ENCODE measurements at regions of chr6 and their contacts with region 1.

Region 1: GRCh38 chr6:28136585-28137504 is 4.8 kb upstream of the ZKSCAN8 start:
- DNase-seq: peak; percentile 94
- H3K4me3 ChIP-seq: peak overlapping the region; percentile 94
- H3K27ac ChIP-seq: peak overlapping the region; percentile 91
- H3K4me1 ChIP-seq: peaks cover 60% of the 10 kb centered on the region
- CTCF ChIP-seq: no peak

Region 2: GRCh38 chr6:28104392-28105244 is 32.2 kb before region 1 on chr6:
- CTCF ChIA-PET with region 1: no interaction called
- POLR2A ChIA-PET with region 1: interaction called, 8 read pairs
- intact Hi-C with region 1: loop called (anchors 1 kb)
- DNase-seq: peak; percentile 90
- H3K4me3 ChIP-seq: peak overlapping the region; percentile 71
- H3K27ac ChIP-seq: peak overlapping the region; percentile 44
- H3K4me1 ChIP-seq: peaks cover 23% of the 10 kb centered on the region
- CTCF ChIP-seq: peak; percentile 68

Region 3: DNA sequence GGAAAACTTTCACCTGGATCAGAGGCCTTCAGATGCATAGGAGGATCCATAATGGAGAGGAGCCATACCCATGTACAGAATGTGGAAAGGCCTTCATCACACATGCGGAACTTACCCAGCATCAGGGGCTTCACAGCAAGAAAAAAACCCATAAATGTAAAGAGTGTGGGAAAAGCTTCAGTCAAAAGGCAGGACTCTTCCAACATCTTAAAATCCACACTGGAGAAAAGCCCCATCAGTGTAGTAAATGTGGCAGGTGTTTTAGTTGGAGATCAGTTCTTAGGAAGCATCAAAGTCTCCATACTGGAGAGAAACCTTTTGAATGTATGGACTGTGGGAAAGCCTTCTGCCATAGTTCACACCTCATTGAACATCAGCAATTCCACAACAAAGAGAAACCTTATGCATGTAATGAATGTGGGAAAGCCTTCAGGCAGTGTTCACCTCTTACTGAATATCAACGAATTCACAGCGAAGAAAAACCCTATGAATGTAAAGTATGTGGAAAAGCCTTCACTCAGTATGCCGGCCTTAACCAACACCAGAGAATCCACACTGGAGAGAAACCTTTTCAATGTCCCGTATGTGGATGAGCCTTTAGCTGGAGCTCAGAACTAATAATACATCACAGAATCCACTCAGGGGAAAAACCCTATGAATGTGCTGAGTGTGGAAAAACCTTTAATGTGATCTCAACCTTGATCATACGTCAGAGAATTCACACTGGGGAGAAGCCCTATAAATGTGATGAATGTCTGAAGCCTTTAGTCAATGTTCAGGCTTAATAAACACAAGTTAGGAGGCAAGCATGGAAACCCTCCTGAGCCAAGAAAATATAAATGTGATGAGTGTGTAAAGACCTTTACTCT is 51.5 kb after region 1 on chr6:
- CTCF ChIA-PET with region 1: no interaction called
- POLR2A ChIA-PET with region 1: no interaction called
- intact Hi-C with region 1: no loop called
- DNase-seq: no peak
- H3K4me3 ChIP-seq: no peak overlapping the region
- H3K27ac ChIP-seq: no peak overlapping the region
- H3K4me1 ChIP-seq: no peaks in the 10 kb centered on the region
- CTCF ChIP-seq: no peak

Region 4: DNA sequence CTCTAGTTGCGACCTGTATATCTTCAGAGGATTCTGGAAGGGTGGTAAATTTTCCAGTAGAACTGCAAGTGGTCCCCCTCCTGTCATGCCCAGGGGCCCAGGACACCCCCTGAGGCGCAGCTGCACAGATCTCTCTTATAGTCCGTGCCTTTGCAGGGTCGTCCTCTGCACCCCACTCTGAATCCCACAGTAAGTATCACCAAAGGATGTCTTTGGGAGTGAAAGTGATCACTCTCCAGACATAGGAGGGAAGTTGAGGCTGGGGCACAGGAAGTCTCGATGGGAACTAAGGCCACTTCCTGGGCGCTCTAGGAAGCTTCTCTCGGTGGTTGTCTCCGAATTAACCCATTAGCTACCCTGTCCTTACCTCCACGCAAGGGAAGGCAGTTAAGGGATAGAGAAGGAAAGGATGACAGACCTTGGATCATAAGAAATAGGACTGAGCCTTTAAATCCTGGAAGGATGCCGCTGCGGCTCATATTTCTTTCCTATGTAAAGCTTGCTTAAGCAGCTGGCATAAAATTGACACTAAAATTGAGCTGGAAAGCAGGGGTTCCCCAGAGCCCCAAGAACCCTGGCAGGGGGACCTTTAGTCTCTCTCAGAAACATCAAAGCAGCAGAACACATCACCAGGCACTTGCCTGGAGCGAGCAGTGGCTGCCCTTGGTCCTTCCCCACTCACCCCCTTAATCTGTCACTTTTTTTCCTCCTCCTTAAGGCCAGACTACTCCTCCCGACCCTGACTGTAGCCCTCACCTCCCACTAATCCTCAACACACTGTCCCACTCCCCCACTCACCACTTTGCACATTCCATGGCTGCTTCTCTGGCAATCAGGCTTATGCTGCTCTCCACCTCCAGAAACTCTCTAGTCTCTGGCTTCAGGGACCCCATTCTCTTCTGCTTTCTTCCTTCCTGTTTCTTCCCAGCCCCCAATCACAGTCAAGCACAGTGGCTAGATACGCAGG is 115.4 kb after region 1 on chr6 and contains the start of gene ZKSCAN4:
- CTCF ChIA-PET with region 1: interaction called, 7 read pairs
- POLR2A ChIA-PET with region 1: interaction called, 14 read pairs
- intact Hi-C with region 1: loop called (anchors 1 kb)
- DNase-seq: peak; percentile 92
- H3K4me3 ChIP-seq: peak within 1 kb of the TSS; percentile 99
- H3K27ac ChIP-seq: peak within 1 kb of the TSS; percentile 47
- H3K4me1 ChIP-seq: peaks cover 21% of the 10 kb centered on the region
- CTCF ChIP-seq: no peak
- total RNA-seq, gene ZKSCAN4: 7.9 and 9.3 TPM in 2 replicates

Region 5: DNA sequence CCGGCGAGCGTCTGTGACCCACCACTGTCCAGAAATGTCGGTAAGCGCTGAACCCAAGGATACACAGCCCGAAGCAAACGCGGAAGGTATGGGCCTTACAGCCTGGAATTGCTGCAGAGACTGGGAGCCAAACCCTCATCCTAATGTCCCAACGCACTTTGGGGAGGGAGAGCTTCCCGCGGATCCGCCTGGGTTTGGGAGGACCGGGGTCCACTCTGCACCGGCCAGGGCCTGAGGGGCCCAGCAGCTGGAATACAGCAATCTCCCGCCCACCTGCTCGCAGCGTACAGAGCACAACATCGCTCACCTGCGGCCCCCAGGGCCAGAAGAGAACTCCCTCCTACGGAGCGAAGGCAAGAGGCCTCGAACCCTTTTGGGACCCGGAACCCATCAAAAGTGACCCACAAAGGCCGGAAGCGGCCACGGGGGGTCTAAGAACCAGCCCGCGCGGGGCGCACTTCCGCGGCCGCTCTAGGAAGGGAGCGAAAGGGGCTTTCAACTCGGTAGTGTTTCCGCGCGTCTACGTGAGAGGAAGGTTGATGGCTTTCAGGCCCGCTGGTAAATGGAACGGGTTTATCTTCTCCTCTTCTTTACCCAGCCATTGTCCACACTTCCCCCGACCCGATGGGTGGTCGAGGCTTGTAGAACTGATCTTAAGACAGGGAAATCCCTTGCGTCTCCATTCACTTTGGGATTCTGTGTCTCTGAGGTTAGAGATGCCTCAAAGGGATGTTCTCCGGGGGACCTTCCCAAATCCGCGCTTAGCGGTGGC is 262.7 kb after region 1 on chr6 and contains the start of gene ZSCAN12:
- CTCF ChIA-PET with region 1: no interaction called
- POLR2A ChIA-PET with region 1: interaction called, 3 read pairs
- intact Hi-C with region 1: loop called (anchors 2 kb)
- DNase-seq: peak; percentile 94
- H3K4me3 ChIP-seq: peak within 1 kb of the TSS; percentile 88
- H3K27ac ChIP-seq: peak within 1 kb of the TSS; percentile 80
- H3K4me1 ChIP-seq: peaks cover 39% of the 10 kb centered on the region
- CTCF ChIP-seq: peak; percentile 77
- total RNA-seq, gene ZSCAN12: 10.2 and 10.5 TPM in 2 replicates

Region 6: DNA sequence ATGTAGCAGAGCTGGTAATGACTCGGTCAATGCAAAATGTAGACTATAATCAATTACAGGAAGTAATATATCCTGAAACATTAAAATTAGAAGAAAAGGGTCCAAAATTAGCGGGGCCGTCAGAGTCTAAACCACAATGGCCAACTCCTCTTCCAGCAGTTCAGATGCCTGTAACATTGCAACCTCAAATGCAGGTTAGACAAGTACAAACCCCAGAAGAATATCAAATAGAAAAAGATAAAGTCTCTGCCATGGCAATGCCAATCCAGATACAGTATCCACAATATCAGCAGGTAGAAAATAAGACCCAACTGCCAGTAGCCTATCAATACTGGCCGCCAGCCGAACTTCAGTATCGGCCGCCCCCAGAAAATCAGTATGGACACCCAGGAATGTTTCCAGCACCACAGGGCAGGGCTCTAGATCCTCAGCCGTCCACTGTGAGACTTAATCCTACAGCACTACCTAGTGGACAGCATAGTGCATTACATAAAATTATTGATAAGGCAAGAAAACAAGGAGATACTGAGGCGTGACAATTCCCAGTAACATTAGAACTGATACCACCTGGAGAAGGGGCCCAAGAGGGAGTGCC is 547.2 kb after region 1 on chr6:
- CTCF ChIA-PET with region 1: no interaction called
- POLR2A ChIA-PET with region 1: no interaction called
- intact Hi-C with region 1: loop called (anchors 5 kb)
- DNase-seq: peak; percentile 65
- H3K4me3 ChIP-seq: no peak overlapping the region
- H3K27ac ChIP-seq: no peak overlapping the region
- H3K4me1 ChIP-seq: peaks cover 3% of the 10 kb centered on the region
- CTCF ChIP-seq: peak; percentile 85

Region 7: DNA sequence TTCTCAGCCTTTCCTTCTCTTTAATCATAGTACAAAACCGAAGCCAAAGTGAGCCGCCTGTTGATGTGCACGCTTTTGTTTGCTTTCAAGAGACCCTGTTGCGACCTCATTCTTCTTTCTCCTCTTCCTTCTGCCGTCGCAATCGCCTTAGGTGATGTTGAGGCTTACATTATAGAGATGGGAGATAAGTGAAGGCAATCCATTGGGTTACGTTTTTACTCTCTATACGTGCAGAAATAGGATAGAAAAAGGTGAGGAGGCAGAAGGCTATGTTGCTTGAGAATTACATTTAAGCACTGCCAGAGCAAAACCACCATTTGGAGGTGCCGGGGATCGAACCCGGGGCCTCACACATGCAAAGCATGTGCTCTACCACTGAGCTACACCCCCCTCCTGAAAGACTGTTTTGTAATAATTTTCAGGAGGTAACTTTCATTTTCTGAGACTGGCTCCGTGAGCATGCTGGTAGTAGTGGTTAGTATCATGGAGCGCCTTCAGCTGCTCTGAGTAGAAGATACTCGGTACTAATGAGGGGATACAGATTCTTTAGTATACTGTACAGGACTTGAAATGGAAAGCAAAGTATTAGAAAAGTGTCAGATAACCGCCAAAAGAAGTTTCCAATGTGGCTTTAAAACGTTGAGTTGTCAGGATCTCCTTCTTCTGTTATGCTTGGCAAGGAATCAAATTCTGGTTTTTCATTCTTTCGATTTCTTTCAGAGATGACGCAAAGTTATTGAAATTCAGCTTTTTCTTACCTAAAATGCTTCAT is 621.4 kb after region 1 on chr6:
- CTCF ChIA-PET with region 1: no interaction called
- POLR2A ChIA-PET with region 1: no interaction called
- intact Hi-C with region 1: no loop called
- DNase-seq: peak; percentile 43
- H3K4me3 ChIP-seq: peak overlapping the region; percentile 36
- H3K27ac ChIP-seq: no peak overlapping the region
- H3K4me1 ChIP-seq: no peaks in the 10 kb centered on the region
- CTCF ChIP-seq: no peak

Measured in OCI-LY7 (cell line).